Prostate gland (tissue), 2 donors: ENCODE measurements at regions of chr5 and their contacts with region 1.

Region 1: GRCh38 chr5:137754126-137754960 is at the start of gene HNRNPA0:
- DNase-seq: peak; percentile 97
- H3K4me3 ChIP-seq: peak within 1 kb of the TSS; percentile 71 to 92
- H3K27ac ChIP-seq: peak within 1 kb of the TSS; percentile 99
- H3K4me1 ChIP-seq: no peaks in the 10 kb centered on the region
- H3K27me3 ChIP-seq: no peaks in the 10 kb centered on the region
- CTCF ChIP-seq: peak in 2 of 4 experiments; percentile 16 to 29
- POLR2A ChIP-seq: peak; percentile 99
- total RNA-seq, gene HNRNPA0: 11.0 to 17.4 TPM

Region 2: DNA sequence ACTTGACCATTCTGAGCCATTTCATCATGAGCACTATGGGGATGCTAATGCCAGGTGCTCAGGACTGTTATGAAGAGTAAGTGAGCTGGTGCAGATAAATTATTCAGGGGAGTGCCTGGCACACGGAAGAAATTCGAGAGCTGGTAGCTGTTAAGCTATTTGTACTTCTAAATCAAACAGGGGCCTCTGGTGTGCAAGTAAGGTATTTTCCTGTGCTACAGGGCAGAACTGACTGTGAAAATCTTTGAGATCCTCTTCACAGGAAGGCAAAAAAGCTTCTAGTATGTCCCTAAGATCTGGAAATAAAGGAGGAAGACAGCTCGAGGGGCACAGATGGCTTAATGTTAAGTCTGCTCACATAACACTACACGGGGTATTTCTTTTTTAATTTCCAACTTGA is 148.9 kb before region 1 on chr5:
- intact Hi-C with region 1: no loop called
- DNase-seq: no peak
- H3K4me3 ChIP-seq: no peak overlapping the region
- H3K27ac ChIP-seq: no peak overlapping the region
- H3K4me1 ChIP-seq: peaks cover 3% of the 10 kb centered on the region
- H3K27me3 ChIP-seq: no peaks in the 10 kb centered on the region
- CTCF ChIP-seq: peak in 1 of 4 experiments; percentile 36
- POLR2A ChIP-seq: no peak

Region 3: DNA sequence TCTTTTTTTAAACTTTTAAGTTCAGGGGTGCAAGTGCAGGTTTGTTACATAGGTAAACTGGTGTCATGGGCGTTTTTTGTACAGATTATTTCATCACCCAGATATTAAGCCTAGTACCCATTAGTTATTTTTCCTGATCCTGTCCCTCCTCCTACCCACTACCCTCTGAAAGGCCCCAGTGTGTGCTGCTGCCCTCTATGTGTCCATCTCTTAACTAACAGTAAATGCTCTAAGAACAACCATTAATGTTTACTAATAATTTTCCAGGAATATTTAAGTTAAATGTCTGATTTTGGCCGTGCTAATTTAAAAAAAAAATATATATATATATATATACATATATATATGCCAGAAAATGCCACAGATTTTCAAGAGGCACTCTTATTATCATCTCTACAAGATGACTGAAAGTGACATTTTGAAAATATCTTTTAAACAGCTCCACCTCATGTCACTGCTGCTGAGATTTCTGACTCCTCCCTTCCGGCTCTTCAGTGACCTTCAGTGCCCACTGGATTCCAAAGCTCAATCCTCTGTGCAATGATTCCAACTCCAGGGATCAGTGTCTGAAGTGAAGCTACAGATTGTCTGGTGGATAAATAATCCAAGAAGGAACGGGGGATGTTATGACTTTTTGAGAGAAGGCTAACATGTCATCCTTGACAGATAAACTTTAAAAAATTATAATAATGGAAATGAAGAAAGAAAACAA is 46.5 kb after region 1 on chr5:
- intact Hi-C with region 1: loop called (anchors 5 kb)
- DNase-seq: no peak
- H3K4me3 ChIP-seq: no peak overlapping the region
- H3K27ac ChIP-seq: no peak overlapping the region
- H3K4me1 ChIP-seq: peaks cover 3% of the 10 kb centered on the region
- H3K27me3 ChIP-seq: no peaks in the 10 kb centered on the region
- CTCF ChIP-seq: no peak
- POLR2A ChIP-seq: no peak

Region 4: DNA sequence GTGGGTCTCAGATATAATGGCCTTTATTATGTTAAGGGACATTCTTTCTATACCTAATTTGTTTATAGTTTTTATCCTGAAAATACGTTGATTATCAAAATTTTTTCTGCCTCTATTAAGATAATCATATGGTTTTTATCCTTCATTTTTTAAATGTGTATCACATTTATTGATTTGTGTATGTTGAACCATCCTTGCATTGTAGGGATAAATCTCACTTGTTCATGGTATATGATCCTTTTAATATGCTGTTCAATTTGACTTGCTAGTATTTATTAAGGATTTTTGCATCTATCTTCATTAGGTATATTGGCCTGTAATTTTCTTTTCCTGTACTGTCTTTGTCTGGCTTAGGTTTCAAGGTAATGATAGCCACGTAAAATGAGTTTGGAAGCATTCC is 160.4 kb after region 1 on chr5:
- intact Hi-C with region 1: no loop called
- DNase-seq: no peak
- H3K4me3 ChIP-seq: no peak overlapping the region
- H3K27ac ChIP-seq: no peak overlapping the region
- H3K4me1 ChIP-seq: no peaks in the 10 kb centered on the region
- H3K27me3 ChIP-seq: no peaks in the 10 kb centered on the region
- CTCF ChIP-seq: no peak
- POLR2A ChIP-seq: no peak